ENCODE measurements at regions of chr3 and their contacts with region 1.

Region 1: DNA sequence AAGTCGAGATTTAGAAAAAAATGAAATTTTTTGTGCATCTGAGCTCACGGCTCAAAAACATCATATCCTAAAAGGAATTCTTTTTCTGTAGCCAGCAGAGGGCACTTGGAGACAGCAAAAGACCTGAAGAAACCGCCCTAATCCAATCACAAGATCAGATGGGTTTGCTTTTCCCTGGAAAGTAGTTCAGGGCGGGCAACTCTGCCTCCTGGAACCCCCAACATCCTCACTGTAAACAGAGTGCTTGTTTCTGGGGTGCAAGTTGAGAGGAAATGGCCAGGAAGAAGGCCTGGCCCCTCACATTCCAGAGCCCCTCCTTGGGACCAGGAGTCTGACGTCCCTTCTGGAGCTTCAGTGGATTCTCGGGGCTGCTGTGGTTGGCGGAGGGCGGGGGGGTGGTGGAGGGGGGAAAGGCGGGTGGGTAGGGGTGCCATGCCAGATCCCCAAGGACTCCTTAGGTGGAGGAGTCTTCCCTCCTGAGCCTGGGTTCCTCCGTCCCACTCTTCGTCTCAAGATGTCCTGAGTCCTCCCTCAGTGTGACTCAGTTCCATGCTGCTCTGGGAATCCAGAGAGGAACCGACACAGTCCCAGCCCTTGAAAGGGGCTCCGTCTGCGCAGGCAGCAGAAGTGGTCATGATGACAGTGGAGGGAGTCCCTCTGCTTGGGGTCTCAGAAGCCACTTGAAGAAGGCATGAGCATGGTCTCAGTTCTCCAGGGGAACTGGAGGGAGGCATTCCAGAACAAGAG is 35.9 kb downstream of the CCK start:
- DNase-seq: peak; percentile 40
- H3K4me3 ChIP-seq: no peak overlapping the region
- H3K27ac ChIP-seq: no peak overlapping the region
- H3K4me1 ChIP-seq: peaks cover 3% of the 10 kb centered on the region
- CTCF ChIP-seq: peak; percentile 71

Region 2: DNA sequence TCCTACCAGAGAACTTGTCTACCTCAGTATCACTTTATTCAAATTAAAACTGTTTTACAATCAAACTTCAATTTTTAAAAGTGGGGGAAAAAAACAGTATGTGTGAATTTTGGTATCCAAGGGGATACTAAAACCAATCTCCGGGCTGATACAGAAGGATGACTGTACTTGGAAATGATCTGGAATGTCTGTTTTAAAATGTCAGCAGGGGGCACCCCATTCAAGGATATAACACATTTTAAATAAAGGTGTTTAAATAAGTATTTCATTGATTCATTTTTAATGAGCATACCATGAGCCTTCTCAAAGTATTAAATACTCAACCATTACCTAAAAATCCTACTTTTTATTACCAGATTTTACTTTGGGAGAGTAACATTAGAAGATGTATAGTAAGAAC is 336.1 kb before region 1 on chr3:
- CTCF ChIA-PET with region 1: no interaction called
- POLR2A ChIA-PET with region 1: no interaction called
- intact Hi-C with region 1: loop called (anchors 2 kb)
- DNase-seq: peak; percentile 38
- H3K4me3 ChIP-seq: no peak overlapping the region
- H3K27ac ChIP-seq: no peak overlapping the region
- H3K4me1 ChIP-seq: peaks cover 9% of the 10 kb centered on the region
- CTCF ChIP-seq: peak; percentile 88

Region 3: DNA sequence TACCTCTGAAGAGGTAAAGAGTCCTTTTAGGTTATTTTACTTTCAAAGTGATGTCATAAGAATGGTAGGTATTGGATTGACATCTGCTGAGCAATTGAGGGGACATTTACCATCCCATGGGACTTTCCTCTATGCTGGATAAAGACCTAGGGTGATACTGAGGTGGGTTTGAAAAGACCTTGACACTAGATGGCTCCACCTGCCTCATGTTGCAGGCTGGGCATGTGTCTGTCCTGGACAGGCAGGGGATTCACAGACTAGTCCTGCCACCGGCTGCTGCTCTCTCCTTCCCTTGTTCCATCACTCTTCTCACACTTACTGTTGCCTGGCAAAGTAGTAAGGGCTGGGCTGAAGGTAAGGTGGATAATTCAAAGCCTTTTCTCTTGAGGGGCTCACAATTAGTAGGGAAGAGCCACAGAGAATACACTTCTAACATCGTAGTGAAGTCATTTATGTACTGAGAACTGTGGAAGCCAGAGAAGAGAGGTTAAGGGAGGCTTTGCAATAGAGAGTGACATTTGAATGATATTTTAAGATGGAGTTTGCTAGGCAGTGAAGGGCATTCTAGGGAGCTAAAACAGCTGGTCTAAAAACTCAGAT is 111.3 kb before region 1 on chr3:
- CTCF ChIA-PET with region 1: interaction called, 3 read pairs
- POLR2A ChIA-PET with region 1: no interaction called
- intact Hi-C with region 1: loop called (anchors 1 kb)
- DNase-seq: peak; percentile 83
- H3K4me3 ChIP-seq: no peak overlapping the region
- H3K27ac ChIP-seq: peak overlapping the region; percentile 22
- H3K4me1 ChIP-seq: peaks cover 58% of the 10 kb centered on the region
- CTCF ChIP-seq: peak; percentile 89

Measured in OCI-LY7 (cell line).